ENCODE measurements at regions of chr5 and their contacts with region 1.

Region 1: DNA sequence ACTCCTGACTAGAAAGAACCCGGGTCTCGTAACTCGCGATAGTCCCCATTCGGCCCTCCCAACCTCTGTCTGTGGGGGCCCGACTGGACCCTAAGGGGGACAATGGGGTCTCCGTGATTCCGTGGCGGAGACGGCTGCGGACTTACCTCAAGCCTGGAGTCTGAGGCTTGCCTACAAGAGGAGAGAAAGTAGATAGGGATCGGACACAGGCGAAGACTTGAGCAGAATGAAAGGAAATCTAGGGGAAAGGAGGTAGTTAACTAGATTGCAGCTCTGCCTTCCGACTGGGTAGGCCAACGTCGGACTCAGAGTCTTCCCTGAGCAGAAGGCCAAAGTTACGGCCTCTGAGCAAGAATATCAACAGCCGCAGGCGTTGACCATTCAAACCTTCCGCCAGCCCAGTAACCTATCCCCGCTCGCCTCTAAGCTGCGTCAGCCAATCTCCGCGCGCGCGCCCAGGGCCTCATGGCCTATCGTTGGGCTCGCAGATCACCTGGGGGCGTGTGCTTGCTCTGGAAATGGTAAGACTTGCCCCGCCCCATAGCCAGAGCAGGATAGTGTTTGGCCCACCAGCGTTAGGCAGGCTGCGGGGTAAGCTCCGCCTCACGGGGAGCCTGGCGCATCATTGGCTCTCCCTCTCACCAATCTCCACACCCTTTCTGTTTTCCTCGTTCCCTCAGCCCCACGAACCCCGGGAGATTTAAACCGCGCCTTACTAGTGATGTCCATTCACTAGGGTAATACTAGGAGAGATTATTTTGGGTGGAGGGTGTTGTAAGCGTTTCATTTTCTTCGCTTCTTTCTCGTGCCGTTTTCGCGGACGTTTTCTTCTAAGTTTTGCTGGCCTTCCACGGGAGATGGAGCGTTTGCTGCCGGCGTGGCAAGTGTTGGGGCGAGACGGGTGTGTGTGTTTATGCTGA is at the start of gene CDC25C:
- DNase-seq: peak; percentile 85 to 98 (median 97)
- H3K4me3 ChIP-seq: peak within 1 kb of the TSS; percentile 27 to 77 (median 61)
- H3K27ac ChIP-seq: peak within 1 kb of the TSS in 12 of 59 donors; percentile 4 to 74 (median 22)
- H3K27me3 ChIP-seq: no peaks in the 10 kb centered on the region
- CTCF ChIP-seq: peak in 38 of 56 donors; percentile 7 to 60 (median 32)
- total RNA-seq, gene CDC25C: 0.23 to 1.5 (median 0.50) TPM in 43 of 120 experiments, not detected in the others

Region 2: DNA sequence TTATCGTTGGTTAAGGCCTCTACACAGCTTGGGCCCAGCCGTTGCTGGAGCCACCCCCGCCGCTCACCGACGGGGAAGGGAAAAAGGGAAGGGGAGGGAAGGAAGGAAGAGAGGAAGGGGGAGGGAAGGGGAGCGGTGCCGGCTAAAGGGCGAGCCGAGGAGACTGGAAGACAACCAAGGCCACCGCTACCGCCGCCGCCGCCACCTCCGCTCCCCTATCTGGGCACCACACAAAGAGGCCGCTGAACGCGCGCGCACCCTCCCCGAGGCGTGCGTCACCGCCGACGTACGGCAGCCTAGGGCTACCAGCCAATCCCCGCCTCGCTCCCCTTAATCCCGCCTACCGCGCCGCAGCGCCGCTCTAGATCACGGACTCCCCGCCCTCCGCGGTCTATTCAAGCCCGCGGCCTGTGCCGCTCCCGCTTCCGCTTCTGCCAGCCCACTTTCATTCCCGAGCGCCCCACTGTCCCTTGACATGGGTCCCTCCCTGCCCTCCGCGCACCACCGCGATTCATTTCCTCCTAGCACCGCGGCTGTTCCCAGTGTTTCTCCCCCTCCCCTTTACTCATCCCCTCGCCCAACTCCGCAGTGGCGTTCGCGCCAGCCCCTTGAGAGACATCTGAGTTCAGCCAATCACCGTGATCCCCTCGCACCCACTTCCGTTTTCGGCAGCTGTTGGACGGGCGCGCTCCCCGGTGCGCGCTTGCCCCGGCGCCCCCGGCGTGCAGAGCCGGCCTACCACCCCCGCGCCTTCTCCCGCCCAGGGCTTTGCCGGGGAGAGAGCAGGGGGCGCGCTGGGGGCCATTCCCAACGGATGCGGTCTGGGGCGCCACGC is 577.4 kb before region 1 on chr5 and contains the start of gene HNRNPA0:
- intact Hi-C with region 1: loop called in 1 of 2 experiments (anchors 10 kb)
- DNase-seq: peak; percentile 96 to 98 (median 98)
- H3K4me3 ChIP-seq: peak within 1 kb of the TSS; percentile 67 to 96 (median 89)
- H3K27ac ChIP-seq: peak within 1 kb of the TSS; percentile 84 to 100 (median 99)
- H3K27me3 ChIP-seq: no peaks in the 10 kb centered on the region
- CTCF ChIP-seq: peak in 36 of 56 donors; percentile 6 to 46 (median 22)
- total RNA-seq, gene HNRNPA0: 18.9 to 34.2 (median 26.7) TPM

Region 3: DNA sequence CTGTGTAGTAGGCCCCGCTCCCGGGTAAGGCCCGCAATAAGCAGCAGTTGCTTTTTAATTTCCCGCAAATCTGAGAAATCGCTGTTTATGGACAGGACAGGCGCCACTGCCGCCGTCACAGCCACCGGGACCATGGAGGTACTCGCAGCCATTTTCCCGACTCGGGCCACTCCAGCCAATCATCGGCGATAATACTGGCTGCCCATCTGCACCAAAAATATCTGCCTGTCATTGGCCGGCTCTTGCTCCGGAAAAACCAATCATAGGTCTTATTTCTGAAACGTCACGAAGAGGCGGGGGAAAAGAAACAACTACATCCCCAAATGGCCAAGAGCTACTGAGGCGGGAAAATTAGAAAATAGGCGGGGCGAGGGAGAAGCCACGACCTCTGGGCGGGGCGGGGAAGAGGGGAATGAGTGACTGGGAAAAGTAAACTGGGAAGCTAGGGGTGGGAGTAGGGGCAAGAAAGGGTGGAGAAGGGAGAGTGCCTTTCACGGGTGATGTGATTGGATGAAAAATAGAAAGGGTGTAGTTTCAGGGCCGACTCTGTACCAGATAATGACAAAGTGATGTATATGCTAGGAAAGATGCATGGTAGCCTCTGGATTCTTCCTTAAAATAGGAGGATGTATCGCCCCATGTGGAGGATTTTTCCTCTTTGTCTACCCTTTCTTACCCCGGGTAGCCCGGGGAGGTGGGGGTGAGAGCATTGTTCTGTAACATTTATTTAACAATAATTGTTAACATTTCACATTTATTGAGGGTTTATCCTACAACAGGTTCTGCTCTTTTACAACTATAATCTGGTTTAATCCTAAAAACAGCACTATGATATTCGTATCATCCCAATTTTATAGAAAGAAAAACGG is 118.3 kb before region 1 on chr5 and contains the start of gene CDC23:
- intact Hi-C with region 1: loop called (anchors 10 kb)
- DNase-seq: peak; percentile 79 to 96 (median 92)
- H3K4me3 ChIP-seq: peak within 1 kb of the TSS; percentile 69 to 100 (median 92)
- H3K27ac ChIP-seq: peak within 1 kb of the TSS in 50 of 59 donors; percentile 10 to 94 (median 72)
- H3K27me3 ChIP-seq: no peaks in the 10 kb centered on the region
- CTCF ChIP-seq: peak in 8 of 56 donors; percentile 11 to 46 (median 24)
- total RNA-seq, gene CDC23: 17.3 to 35.9 (median 25.7) TPM

Region 4: GRCh38 chr5:138352071-138352721 is 20.5 kb after region 1 on chr5 and contains the start of gene KDM3B:
- intact Hi-C with region 1: no loop called
- DNase-seq: peak in 8 of 10 donors; percentile 40 to 86 (median 64)
- H3K4me3 ChIP-seq: peak within 1 kb of the TSS; percentile 62 to 98 (median 89)
- H3K27ac ChIP-seq: peak within 1 kb of the TSS; percentile 65 to 99 (median 96)
- H3K27me3 ChIP-seq: no peaks in the 10 kb centered on the region
- CTCF ChIP-seq: peak; percentile 77 to 97 (median 90)
- total RNA-seq, gene KDM3B: 50.2 to 81.2 (median 66.4) TPM